ENCODE measurements at regions of chr2 and their contacts with region 1.

Region 1: GRCh38 chr2:17573085-17573803 is 32.7 kb downstream of the VSNL1 start:
- DNase-seq: no peak
- ATAC-seq: no peak
- H3K4me3 ChIP-seq: no peak overlapping the region
- H3K27ac ChIP-seq: no peak overlapping the region
- H3K4me1 ChIP-seq: no peaks in the 10 kb centered on the region
- H3K27me3 ChIP-seq: no peaks in the 10 kb centered on the region
- CTCF ChIP-seq: no peak
- POLR2A ChIP-seq: no peak

Region 2: GRCh38 chr2:17416884-17417391 is 156.3 kb before region 1 on chr2:
- in situ Hi-C with region 1: no loop called
- intact Hi-C with region 1: no loop called
- DNase-seq: no peak
- ATAC-seq: no peak
- H3K4me3 ChIP-seq: no peak overlapping the region
- H3K27ac ChIP-seq: no peak overlapping the region
- H3K4me1 ChIP-seq: no peaks in the 10 kb centered on the region
- H3K27me3 ChIP-seq: no peaks in the 10 kb centered on the region
- CTCF ChIP-seq: no peak
- POLR2A ChIP-seq: no peak

Region 3: DNA sequence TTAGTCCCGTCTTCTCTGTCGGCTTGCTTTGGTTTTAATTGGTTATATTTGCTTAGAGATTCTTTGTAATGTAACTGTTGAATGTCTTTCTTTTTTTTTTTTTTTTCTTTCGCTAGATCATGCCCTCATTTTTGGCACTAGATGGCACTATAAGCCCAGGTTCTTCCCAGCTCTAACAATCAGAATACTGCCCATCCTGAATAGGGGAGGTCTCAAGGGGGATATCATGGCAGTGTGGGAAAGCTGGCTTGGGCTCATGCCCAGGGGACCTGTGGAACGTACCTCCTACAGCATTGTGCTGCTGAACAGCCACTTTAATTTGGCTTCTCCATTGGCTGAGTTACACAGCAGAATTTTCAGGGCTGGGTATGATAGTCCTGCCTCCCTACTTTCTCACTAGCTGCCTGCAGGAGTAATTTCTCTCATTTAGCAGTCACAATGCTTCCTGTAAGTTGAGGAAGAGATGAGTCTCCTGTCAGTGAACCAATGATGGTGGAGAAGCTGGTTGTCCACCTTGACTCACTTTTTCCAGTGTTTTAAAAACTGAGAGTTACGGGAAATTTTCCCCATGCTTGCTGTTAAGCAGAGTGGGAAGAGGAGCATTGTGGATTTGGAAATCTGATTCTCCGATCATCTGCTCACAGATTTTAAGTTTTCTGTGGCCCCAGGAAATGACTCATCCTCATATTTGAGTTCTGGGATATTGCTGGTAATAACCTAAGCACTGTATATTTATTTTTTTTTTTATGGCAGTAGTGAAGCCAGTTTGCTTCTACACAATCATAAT is 102.2 kb before region 1 on chr2:
- in situ Hi-C with region 1: no loop called
- intact Hi-C with region 1: loop called (anchors 10 kb)
- DNase-seq: no peak
- ATAC-seq: no peak
- H3K4me3 ChIP-seq: no peak overlapping the region
- H3K27ac ChIP-seq: no peak overlapping the region
- H3K4me1 ChIP-seq: no peaks in the 10 kb centered on the region
- H3K27me3 ChIP-seq: no peaks in the 10 kb centered on the region
- CTCF ChIP-seq: peak in 3 of 5 experiments; percentile 17 to 41 (median 24)
- POLR2A ChIP-seq: no peak

Measured in gastrocnemius medialis (tissue), 4 donors.